GM10248 (cell line): ENCODE measurements at regions of chr1 and their contacts with region 1.

Region 1: GRCh38 chr1:211903490-211904245 is 73.1 kb upstream of the LPGAT1 start:
- DNase-seq: no peak
- CTCF ChIP-seq: no peak

Region 2: GRCh38 chr1:211892577-211892976 is 11.1 kb before region 1 on chr1:
- CTCF ChIA-PET with region 1: interaction called, 16 read pairs
- POLR2A ChIA-PET with region 1: no interaction called
- DNase-seq: no peak
- CTCF ChIP-seq: no peak

Region 3: DNA sequence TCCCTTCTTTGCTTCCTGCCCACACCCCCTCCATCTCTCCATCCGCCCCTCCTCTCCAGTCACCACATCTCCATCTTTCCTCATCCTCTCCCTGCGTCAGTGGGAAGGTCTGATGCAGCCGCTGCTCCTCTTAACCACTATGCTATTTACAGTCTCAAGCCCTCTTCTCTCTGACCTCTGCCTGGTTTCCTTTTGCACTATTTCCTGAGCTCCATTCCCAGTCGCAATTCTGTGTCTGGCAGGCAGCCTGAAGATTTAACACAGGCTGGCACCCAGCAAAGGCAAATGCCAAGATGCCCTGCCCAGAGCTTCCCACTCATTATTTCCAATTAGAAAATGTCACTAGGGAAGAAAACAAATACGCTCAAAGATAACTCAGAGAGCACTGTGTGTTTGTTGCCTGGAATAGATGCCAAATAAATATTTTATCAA is 16.5 kb after region 1 on chr1:
- CTCF ChIA-PET with region 1: no interaction called
- POLR2A ChIA-PET with region 1: no interaction called
- DNase-seq: no peak
- CTCF ChIP-seq: no peak

Region 4: GRCh38 chr1:211965108-211965805 is 61.6 kb after region 1 on chr1:
- CTCF ChIA-PET with region 1: no interaction called
- POLR2A ChIA-PET with region 1: no interaction called
- DNase-seq: no peak
- CTCF ChIP-seq: no peak

Region 5: DNA sequence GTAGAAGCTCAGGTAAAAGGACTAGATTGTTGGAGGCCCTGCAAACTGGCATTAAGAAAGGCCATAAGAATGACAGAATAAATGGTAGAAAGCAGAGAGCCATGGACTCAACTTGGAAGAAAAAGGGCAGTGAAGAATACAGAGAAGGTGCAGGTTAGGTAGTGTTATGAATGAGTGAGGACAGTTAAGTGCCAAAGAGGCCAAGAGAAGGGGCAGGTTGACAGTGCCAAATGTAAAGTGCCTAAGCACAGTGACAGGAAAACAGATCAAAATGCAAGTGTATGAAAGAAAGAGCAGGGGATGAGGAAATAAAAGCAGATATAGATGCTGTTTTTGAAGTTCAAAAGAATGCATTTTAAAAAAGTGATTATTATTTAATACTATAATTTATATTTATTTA is 88.0 kb after region 1 on chr1:
- CTCF ChIA-PET with region 1: no interaction called
- POLR2A ChIA-PET with region 1: no interaction called
- DNase-seq: no peak
- CTCF ChIP-seq: no peak